MCF 10A (cell line): ENCODE measurements at regions of chr14 and their contacts with region 1.

Region 1: GRCh38 chr14:61503167-61503801 is 181.9 kb downstream of the PRKCH start:
- DNase-seq: peak; percentile 80
- H3K4me3 Mint-ChIP-seq: peak overlapping the region; percentile 44
- H3K27ac Mint-ChIP-seq: peak overlapping the region; percentile 91
- H3K4me1 Mint-ChIP-seq: peaks cover 28% of the 10 kb centered on the region
- H3K27me3 Mint-ChIP-seq: no peaks in the 10 kb centered on the region
- CTCF ChIP-seq: no peak

Region 2: DNA sequence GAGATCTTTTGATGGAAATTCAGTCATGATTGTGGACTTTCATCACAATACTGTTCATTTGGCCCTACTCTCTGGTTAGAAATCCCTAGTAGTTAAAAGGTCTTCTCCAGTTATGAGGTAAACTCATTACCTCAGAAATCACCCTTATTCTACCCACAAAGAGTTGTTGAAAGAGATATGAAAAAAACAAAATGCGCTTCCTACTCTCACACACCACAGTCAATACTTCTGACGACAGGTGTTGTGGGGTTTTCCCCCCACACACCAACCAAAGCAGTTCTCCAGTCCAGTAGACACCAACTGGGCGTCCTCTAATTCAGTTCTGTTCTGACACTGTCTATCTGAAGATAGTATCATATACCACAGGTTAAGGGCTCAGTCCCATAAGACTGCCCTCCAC is 577.3 kb before region 1 on chr14:
- CTCF ChIA-PET with region 1: no interaction called
- POLR2A ChIA-PET with region 1: no interaction called
- intact Hi-C with region 1: no loop called
- DNase-seq: no peak
- H3K4me3 Mint-ChIP-seq: no peak overlapping the region
- H3K27ac Mint-ChIP-seq: no peak overlapping the region
- H3K4me1 Mint-ChIP-seq: peaks cover 7% of the 10 kb centered on the region
- H3K27me3 Mint-ChIP-seq: no peaks in the 10 kb centered on the region
- CTCF ChIP-seq: no peak

Region 3: GRCh38 chr14:61493239-61493638 is 10.0 kb before region 1 on chr14:
- CTCF ChIA-PET with region 1: no interaction called
- POLR2A ChIA-PET with region 1: interaction called, 11 read pairs
- intact Hi-C with region 1: no loop called
- DNase-seq: peak; percentile 75
- H3K4me3 Mint-ChIP-seq: no peak overlapping the region
- H3K27ac Mint-ChIP-seq: no peak overlapping the region
- H3K4me1 Mint-ChIP-seq: peaks cover under 1% of the 10 kb centered on the region
- H3K27me3 Mint-ChIP-seq: no peaks in the 10 kb centered on the region
- CTCF ChIP-seq: no peak

Region 4: GRCh38 chr14:61537563-61538463 is 34.5 kb after region 1 on chr14:
- CTCF ChIA-PET with region 1: no interaction called
- POLR2A ChIA-PET with region 1: interaction called, 13 read pairs
- intact Hi-C with region 1: no loop called
- DNase-seq: peak; percentile 97
- H3K4me3 Mint-ChIP-seq: peak overlapping the region; percentile 10
- H3K27ac Mint-ChIP-seq: peak overlapping the region; percentile 88
- H3K4me1 Mint-ChIP-seq: peaks cover 32% of the 10 kb centered on the region
- H3K27me3 Mint-ChIP-seq: no peaks in the 10 kb centered on the region
- CTCF ChIP-seq: no peak